Common myeloid progenitor, CD34-positive (primary cell): ENCODE measurements at regions of chr1 and their contacts with region 1.

Region 1: GRCh38 chr1:117758444-117759316 is 152.8 kb downstream of the TENT5C start:
- DNase-seq: peak; percentile 82 to 88 (median 87)
- H3K4me3 ChIP-seq: peak overlapping the region; percentile 30 to 76 (median 50)
- H3K27ac ChIP-seq: no peak overlapping the region
- H3K4me1 ChIP-seq: peaks cover 0 to 12% (median 9%) of the 10 kb centered on the region in 4 experiments
- H3K27me3 ChIP-seq: peaks cover 0 to 10% (median 0%) of the 10 kb centered on the region in 5 experiments

Region 2: GRCh38 chr1:117527566-117528102 is 231.0 kb before region 1 on chr1:
- CTCF ChIA-PET with region 1: interaction called, 58 read pairs
- POLR2A ChIA-PET with region 1: no interaction called
- DNase-seq: no peak
- H3K4me3 ChIP-seq: no peak overlapping the region
- H3K27ac ChIP-seq: no peak overlapping the region
- H3K4me1 ChIP-seq: no peaks in the 10 kb centered on the region
- H3K27me3 ChIP-seq: no peaks in the 10 kb centered on the region

Region 3: GRCh38 chr1:117606649-117607430 is 151.8 kb before region 1 on chr1:
- CTCF ChIA-PET with region 1: interaction called, 13 read pairs
- POLR2A ChIA-PET with region 1: interaction called, 3 read pairs
- DNase-seq: peak in 2 of 3 donors; percentile 62 to 65
- H3K4me3 ChIP-seq: peak overlapping the region; percentile 68 to 98 (median 88)
- H3K27ac ChIP-seq: peak overlapping the region; percentile 30 to 73
- H3K4me1 ChIP-seq: peaks cover 11 to 66% (median 34%) of the 10 kb centered on the region in 4 experiments
- H3K27me3 ChIP-seq: no peaks in the 10 kb centered on the region

Region 4: DNA sequence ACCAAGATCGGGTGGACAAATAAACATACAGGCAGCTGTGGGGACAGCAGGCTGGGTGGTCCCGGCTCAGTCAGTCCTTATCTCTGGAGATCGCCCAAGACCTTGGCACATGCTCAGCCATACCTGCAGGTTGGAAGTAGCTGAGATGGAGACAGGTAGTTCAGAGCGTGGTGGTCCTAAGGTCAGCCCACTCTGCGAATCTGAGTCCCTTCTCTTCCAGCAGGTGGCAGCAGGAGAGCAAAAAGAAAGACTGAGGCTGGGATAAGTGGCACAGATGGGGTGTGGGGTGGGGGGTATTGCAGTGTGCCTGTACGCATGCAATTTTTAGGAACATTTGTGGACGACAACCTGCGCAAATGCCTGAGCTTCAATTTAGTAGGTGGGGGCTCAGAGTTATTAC is 48.0 kb before region 1 on chr1:
- CTCF ChIA-PET with region 1: interaction called, 38 read pairs
- POLR2A ChIA-PET with region 1: no interaction called
- DNase-seq: peak; percentile 11 to 30 (median 16)
- H3K4me3 ChIP-seq: no peak overlapping the region
- H3K27ac ChIP-seq: no peak overlapping the region
- H3K4me1 ChIP-seq: peaks cover 0 to 4% (median under 1%) of the 10 kb centered on the region in 4 experiments
- H3K27me3 ChIP-seq: no peaks in the 10 kb centered on the region

Region 5: DNA sequence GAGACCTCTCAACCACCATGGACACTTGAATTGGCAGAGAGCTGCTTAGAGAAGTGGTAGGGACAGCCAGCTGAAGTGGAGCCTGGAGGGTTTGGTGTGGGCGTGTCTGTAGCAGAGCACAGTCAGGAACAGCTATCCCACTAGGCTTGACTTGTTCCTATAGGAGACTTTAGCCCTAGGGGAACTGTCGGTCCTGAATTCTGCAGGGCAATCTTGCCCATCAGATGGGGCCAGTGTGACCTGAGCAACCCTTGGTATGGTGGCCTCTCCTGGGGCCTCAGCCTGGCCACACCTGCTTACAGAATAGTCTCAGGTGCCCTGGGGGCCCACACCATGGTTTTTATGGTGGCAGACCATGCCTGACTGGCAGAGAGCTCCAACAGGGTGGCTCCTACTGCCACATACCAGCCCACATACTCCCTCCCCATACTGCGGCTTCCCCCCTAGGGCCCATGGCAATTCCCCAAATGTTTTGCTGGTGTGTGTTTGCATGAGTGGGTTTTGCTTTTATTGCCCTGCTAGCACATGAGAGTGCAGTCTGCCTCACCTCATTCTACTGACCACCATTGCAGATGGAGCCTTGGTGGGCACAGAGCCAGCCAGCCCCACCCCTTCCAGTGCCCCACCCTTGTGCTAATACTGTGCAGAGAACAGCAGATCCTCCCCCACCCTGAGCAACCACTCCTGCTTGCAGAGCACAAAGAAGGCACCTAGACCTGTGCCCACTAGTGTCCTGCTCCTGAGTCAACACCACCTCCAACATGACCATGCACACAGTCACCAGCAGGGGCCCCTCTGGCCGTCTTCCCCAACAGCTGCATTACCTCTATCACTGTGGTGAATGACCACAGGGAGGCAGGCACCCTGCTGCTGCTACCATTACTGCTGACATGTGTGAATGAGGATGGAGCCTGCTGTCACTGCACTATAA is 83.8 kb after region 1 on chr1:
- CTCF ChIA-PET with region 1: no interaction called
- POLR2A ChIA-PET with region 1: no interaction called
- DNase-seq: no peak
- H3K4me3 ChIP-seq: no peak overlapping the region
- H3K27ac ChIP-seq: no peak overlapping the region
- H3K4me1 ChIP-seq: no peaks in the 10 kb centered on the region
- H3K27me3 ChIP-seq: no peaks in the 10 kb centered on the region